T-cell (primary cell): ENCODE measurements at regions of chr3 and their contacts with region 1.

Region 1: GRCh38 chr3:170908235-170909116 is at the start of gene EIF5A2:
- DNase-seq: peak; percentile 88 to 99 (median 97)
- ATAC-seq: peak; percentile 95 to 98 (median 96)
- H3K4me3 ChIP-seq: peak within 1 kb of the TSS; percentile 71 to 74
- H3K4me3 Mint-ChIP-seq: peak within 1 kb of the TSS; percentile 78 to 94 (median 93)
- H3K27ac ChIP-seq: peak within 1 kb of the TSS; percentile 81
- H3K27ac Mint-ChIP-seq: peak within 1 kb of the TSS; percentile 96
- H3K4me1 ChIP-seq: peaks cover 8 to 13% of the 10 kb centered on the region in 2 experiments
- H3K4me1 Mint-ChIP-seq: peaks cover 10 to 31% (median 26%) of the 10 kb centered on the region in 3 donors
- H3K27me3 ChIP-seq: no peaks in the 10 kb centered on the region
- H3K27me3 Mint-ChIP-seq: no peaks in the 10 kb centered on the region
- total RNA-seq, gene EIF5A2: 10.1 to 14.1 (median 13.5) TPM

Region 2: DNA sequence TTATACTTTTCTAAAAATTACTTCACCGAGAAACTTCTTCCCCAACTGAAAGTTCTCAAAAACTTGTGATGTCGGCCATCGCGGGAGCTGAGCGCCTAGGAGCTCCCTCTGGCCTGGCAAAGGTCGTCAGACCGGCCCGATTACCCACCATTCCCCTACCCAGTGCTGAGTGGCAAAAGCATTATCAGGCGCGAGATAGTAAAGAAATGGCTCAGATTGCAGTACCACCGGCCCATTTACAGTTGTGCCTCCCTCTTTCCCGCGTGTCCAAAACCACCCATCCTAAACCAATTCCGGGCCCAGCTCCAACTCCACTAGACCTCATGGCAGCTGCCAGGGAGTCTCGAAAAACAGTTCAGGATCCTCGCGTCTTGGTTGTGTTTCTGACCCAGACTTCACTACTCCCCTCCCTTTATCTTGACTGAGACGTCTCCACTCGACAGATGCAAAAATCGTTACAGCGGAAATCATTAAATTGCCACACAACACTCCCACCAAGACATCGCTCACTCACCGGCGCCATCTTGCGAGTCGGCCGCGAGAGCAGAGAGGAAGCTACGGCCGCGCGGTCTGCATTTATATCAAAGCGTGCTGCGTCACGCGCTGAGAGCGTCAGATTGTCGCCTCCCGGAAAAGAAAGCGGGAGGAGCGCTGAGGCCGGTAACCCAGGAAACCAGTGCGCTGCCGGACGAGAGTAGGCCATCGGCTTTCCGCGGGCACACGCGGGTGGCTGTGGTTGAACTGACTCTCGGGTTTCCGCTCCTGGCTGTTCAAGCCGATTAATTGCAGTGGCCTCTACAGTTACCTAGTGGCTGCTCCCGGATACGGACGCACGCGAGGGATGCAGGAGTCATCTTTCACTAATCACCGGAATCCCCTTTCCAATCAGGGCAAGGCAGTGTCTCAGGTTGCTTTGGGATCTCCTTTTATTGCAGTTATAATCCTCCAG is 38.6 kb before region 1 on chr3 and contains the start of gene RPL22L1:
- CTCF ChIA-PET with region 1: interaction called, 3 read pairs
- POLR2A ChIA-PET with region 1: interaction called in 1 of 2 experiments, 13 read pairs
- DNase-seq: peak; percentile 84 to 97 (median 91)
- ATAC-seq: peak; percentile 95 to 97 (median 96)
- H3K4me3 ChIP-seq: peak within 1 kb of the TSS; percentile 73 to 97
- H3K4me3 Mint-ChIP-seq: peak within 1 kb of the TSS; percentile 90 to 93 (median 93)
- H3K27ac ChIP-seq: peak within 1 kb of the TSS; percentile 86
- H3K27ac Mint-ChIP-seq: peak within 1 kb of the TSS; percentile 92 to 96
- H3K4me1 ChIP-seq: peaks cover 14 to 20% of the 10 kb centered on the region in 2 experiments
- H3K4me1 Mint-ChIP-seq: peaks cover 32 to 38% (median 35%) of the 10 kb centered on the region in 3 donors
- H3K27me3 ChIP-seq: no peaks in the 10 kb centered on the region
- H3K27me3 Mint-ChIP-seq: no peaks in the 10 kb centered on the region
- total RNA-seq, gene RPL22L1: 21.3 to 56.2 (median 29.9) TPM